Ovary (tissue), 10 donors: ENCODE measurements at regions of chr10 and their contacts with region 1.

Region 1: DNA sequence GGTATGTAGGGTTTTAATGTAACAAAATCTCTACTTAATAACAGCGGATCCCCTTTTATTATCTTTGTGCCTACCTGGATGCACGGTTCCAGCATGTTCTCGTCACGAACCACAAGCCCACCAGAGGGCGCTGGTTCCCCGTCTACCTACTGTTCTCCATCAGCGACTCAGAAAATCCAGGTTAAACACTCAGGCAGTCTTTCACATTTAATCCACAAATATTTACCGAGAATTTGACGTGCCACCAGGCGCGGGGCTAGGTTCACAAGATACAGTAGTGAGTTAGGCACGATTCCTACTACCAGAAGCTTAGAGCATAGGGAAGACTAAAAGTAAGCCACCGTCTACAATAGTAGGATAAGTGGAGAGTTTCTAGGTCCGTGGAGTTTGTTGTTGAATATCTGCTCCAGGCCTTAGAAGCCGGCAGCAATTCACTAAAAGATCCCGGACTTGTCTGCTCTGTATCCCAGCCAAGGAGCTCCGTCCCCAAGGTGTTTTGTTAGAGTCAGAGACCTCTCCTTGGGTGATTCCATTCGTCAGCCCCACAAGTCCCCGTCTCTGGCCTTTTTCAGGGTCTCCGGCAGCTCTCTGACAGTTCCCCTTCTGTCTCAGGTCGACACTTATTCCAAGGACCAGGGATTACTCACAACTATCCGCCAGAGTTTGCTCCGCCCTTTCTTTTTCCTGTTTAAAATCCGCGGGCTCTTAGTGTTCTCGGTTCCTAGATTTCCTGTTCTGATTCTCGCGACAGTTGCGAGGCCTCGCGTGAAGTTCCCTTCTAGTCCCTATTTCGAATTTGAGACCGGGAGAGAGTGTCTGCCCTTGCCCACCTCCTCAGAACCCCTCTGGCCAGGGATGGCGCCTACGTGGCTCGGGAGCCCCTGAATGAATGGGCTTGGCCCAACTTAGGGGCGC is 1.5 kb upstream of the KAZALD1 start:
- DNase-seq: peak; percentile 80 to 96 (median 94)
- H3K4me3 ChIP-seq: peak overlapping the region; percentile 83
- H3K27ac ChIP-seq: peak overlapping the region; percentile 58 to 76
- H3K4me1 ChIP-seq: peaks cover 7% of the 10 kb centered on the region
- H3K27me3 ChIP-seq: peaks cover 3% of the 10 kb centered on the region
- CTCF ChIP-seq: peak; percentile 57 to 81 (median 57)
- EP300 ChIP-seq: no peak
- POLR2A ChIP-seq: no peak

Region 2: GRCh38 chr10:100743626-100744135 is 316.6 kb before region 1 on chr10:
- intact Hi-C with region 1: no loop called
- DNase-seq: no peak
- H3K4me3 ChIP-seq: no peak overlapping the region
- H3K27ac ChIP-seq: no peak overlapping the region
- H3K4me1 ChIP-seq: peaks cover 2% of the 10 kb centered on the region
- H3K27me3 ChIP-seq: peaks cover 5% of the 10 kb centered on the region
- CTCF ChIP-seq: no peak
- EP300 ChIP-seq: no peak
- POLR2A ChIP-seq: no peak

Region 3: DNA sequence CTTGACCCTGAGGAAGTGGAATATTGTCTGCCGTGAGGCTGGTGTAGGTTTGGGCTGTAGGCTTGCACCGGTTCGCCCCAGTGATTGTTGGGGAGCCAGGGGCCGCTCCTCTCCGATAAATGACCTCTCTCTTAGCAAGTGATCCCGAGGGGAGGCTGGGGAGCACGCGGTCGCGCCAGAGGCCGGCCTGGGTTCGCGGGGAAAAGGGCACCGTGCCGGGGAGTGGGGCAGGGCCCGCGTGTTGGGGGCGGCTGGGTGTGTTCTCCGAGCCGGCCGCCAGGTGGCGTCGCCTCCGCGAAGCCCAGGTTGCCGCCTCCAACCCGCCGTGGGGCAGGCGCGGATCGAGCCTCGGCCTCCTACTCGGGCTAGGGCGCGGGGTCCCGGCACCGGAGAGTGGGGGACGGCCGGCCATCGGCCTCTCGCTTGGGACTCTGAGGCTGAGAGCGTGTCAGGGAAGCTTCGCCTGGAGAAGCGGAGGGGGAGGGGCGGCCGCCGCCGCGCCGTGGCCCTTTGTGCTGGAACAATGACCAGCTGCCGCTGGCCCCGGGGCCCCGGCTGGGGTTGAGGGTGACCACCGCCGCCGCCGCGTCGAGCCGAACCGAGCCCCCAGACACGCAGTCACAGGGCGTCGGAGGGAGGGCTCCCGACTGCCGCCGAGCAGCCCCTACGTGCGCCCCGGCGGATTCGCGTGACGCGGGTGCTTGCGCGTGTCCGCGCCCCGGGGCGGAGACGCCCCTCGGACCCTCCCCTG is 61.1 kb before region 1 on chr10:
- intact Hi-C with region 1: loop called in 1 of 4 experiments (anchors 5 kb)
- DNase-seq: peak; percentile 86 to 92 (median 88)
- H3K4me3 ChIP-seq: peak overlapping the region; percentile 93
- H3K27ac ChIP-seq: peak overlapping the region; percentile 99 to 100
- H3K4me1 ChIP-seq: peaks cover 16% of the 10 kb centered on the region
- H3K27me3 ChIP-seq: no peaks in the 10 kb centered on the region
- CTCF ChIP-seq: peak; percentile 95 to 99 (median 98)
- EP300 ChIP-seq: no peak
- POLR2A ChIP-seq: peak; percentile 97

Region 4: DNA sequence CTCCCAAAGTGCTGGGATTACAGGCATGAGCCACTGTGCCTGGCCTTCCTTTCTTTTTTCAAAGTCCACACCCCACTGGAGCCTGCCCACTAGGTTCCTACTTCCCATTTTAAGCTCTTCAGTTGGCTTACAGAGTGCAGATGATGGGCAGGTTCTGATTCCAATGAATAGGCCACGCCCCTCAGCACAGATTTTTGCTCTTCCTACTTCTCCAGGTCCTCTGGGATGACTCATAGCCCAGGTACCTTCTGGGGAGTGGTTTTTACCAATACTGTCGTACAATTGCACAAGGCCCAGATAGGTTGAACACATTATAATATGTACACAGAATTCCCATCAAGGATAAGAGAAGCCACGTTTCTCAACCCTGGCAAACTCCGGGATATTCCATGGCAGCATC is 58.3 kb after region 1 on chr10:
- intact Hi-C with region 1: no loop called
- DNase-seq: no peak
- H3K4me3 ChIP-seq: no peak overlapping the region
- H3K27ac ChIP-seq: no peak overlapping the region
- H3K4me1 ChIP-seq: peaks cover 9% of the 10 kb centered on the region
- H3K27me3 ChIP-seq: no peaks in the 10 kb centered on the region
- CTCF ChIP-seq: no peak
- EP300 ChIP-seq: no peak
- POLR2A ChIP-seq: no peak